K562 (cell line): ENCODE measurements at regions of chr1 and their contacts with region 1.

Region 1: DNA sequence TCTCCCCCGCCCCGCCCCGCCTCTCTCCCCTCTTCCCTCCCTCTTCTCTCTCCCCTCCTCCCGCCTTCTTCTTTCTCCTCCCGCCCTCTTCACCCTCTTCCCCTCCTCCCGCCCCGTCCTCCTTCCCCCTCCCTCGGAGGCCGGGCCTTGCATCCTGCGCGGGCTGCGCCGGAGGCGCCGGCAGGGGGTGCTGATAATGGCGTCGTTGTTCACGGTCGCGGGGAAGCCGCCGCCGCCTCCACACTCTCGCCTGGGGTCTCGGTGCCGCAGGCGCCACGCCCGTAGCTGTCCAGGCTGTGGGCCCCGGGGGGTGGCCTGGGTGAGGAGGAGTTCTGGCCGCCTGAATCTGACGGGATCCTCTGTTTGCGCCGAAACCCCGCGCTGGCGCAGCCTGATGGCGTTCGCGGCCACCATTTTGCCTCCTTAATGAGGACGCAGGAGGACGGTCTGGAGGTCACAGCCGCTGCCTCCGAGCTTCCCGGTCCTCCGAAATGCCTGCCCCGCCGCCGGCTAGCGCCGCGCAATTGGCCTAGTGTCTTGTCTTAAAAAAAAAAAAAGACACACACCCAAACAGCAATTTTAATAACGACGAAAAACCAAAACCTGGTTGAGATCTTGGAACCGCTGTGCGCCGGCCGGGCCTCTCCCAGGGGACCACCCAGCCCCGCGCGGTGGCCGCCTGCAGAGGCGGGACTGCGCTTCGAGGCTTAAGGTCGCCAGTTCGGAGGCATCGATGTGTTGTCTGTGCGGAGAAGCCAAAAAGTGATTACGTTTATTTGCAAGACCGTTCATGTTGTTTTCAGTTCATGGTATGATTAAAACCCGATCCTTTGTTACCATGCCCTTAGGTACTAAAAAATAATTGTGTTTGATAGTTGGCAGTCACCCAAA is 106.6 kb upstream of the HNRNPU start:
- DNase-seq: peak; percentile 87 to 99 (median 91)
- ATAC-seq: peak; percentile 83
- H3K4me3 ChIP-seq: peak overlapping the region; percentile 53
- H3K27ac ChIP-seq: peak overlapping the region; percentile 95
- H3K4me1 ChIP-seq: peaks cover 10 to 21% of the 10 kb centered on the region in 2 experiments; a peak in 4 of 5 replicates
- H3K27me3 ChIP-seq: no peaks in the 10 kb centered on the region
- CTCF ChIP-seq: peak; percentile 65 to 78 (median 74)
- EP300 ChIP-seq: peak; percentile 3; the same call in 1 of the 2 replicates
- POLR2A ChIP-seq: peak; percentile 95
- RAD21 ChIP-seq: peak; percentile 32 to 39

Region 2: DNA sequence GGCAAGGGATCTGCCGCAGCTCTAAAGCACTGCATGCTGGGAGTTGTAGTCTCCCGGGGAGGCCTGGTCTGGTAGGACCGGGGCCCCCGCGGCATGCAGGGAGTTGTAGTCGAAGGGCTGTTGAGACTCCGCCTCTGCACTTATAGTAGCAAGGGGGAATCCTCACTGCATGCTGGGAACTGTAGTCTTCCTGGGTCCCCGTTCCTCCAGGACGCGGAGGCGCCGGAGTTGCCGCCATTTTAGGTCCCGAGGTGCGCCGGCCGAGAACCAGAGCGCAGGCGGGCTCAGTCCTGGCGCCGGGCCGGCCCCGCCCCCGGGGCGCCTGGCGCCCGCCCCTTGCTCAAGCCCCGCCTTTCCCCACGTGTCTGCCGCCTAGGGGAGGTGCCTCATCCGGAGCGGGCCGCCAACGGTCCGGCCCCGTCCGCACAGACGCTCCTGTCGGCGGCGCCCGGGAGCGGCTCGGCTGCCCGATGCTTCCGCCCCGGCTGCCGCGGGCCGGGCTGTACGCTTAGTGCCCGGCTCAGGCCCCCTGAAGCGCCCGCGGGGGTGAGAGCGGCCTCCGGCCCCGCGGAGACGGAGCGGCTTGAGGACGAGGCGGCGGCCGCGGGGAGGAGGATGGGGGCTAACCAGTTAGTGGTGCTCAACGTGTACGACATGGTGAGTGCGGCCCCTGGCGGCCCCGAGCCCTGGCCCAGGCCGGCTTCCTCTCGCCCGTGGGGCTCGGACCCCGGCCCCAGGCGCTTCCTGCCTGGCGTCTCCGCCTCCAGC is 318.0 kb before region 1 on chr1 and contains the start of gene DESI2:
- CTCF ChIA-PET with region 1: no interaction called
- POLR2A ChIA-PET with region 1: interaction called, 4 read pairs
- in situ Hi-C with region 1: no loop called
- intact Hi-C with region 1: loop called (anchors 5 kb)
- DNase-seq: peak; percentile 98 to 99 (median 98)
- ATAC-seq: peak; percentile 95
- H3K4me3 ChIP-seq: peak within 1 kb of the TSS; percentile 76
- H3K27ac ChIP-seq: peak within 1 kb of the TSS; percentile 77
- H3K4me1 ChIP-seq: peaks cover 11 to 25% of the 10 kb centered on the region in 2 experiments
- H3K27me3 ChIP-seq: no peaks in the 10 kb centered on the region
- CTCF ChIP-seq: peak; percentile 54 to 60 (median 60)
- EP300 ChIP-seq: no peak; the same call in 1 of the 2 replicates
- POLR2A ChIP-seq: peak; percentile 86
- RAD21 ChIP-seq: peak; percentile 46 to 55
- polyA plus RNA-seq, gene DESI2: 17.4 to 20.4 TPM

Region 3: GRCh38 chr1:244796718-244797406 is 174.0 kb before region 1 on chr1:
- CTCF ChIA-PET with region 1: no interaction called
- POLR2A ChIA-PET with region 1: no interaction called
- in situ Hi-C with region 1: no loop called
- intact Hi-C with region 1: loop called (anchors 2 kb)
- DNase-seq: peak; percentile 62 to 80 (median 64)
- ATAC-seq: peak; percentile 77
- H3K4me3 ChIP-seq: no peak overlapping the region
- H3K27ac ChIP-seq: no peak overlapping the region
- H3K4me1 ChIP-seq: no peaks in the 10 kb centered on the region; a peak in 2 of 5 replicates
- H3K27me3 ChIP-seq: peaks cover 16 to 47% of the 10 kb centered on the region in 2 experiments
- CTCF ChIP-seq: peak; percentile 71 to 95 (median 91)
- EP300 ChIP-seq: no peak
- POLR2A ChIP-seq: no peak
- RAD21 ChIP-seq: peak; percentile 83 to 96

Region 4: DNA sequence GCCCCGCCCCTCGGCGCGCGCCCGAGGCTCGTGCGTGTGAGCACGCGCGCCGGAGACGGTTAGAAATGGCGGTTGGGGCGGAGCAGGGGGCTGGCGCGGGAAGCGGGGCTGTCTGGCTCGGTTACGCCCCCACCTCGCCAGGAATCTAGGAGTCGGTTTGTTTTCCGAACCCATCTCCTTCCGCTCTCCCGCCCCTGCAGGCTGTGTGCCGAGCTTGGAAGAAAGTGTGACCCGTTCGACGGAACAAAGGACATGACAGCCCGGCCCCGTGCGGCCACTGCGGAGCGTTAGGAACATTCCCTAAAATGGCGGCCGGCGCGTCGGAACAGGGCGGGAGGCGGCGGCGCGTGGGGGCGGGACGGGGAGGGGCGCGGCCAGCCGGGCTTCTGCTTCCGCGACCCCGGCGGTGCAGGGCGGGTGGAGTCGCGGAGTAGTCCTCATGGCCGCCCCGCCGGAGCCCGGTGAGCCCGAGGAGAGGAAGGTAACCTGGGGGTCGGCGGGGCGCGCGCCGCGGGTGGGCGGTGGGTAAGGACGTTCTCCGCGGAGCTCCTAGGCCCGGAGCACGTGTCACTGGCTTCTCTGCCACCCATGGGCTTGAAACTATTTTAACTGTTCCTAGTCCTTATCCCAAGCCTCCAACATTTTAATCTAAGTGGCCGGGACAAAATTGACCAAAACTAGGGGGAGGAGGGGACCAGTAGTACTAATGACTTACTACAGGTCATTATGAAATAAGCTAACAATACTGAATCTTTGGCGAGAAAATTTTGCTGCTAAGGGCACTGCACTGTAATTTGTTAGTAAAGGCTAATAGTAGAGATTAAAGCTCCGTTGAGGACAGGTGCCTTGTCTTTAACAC is 135.4 kb before region 1 on chr1 and contains the start of gene COX20:
- CTCF ChIA-PET with region 1: interaction called, 3 read pairs
- POLR2A ChIA-PET with region 1: interaction called, 10 read pairs
- in situ Hi-C with region 1: no loop called
- intact Hi-C with region 1: loop called (anchors 1 kb)
- DNase-seq: peak; percentile 94 to 98 (median 95)
- ATAC-seq: peak; percentile 79
- H3K4me3 ChIP-seq: peak within 1 kb of the TSS; percentile 74
- H3K27ac ChIP-seq: peak within 1 kb of the TSS; percentile 98
- H3K4me1 ChIP-seq: peaks cover 14 to 15% of the 10 kb centered on the region in 2 experiments; a peak in 4 of 5 replicates
- H3K27me3 ChIP-seq: no peaks in the 10 kb centered on the region
- CTCF ChIP-seq: no peak
- EP300 ChIP-seq: 0 out of 2 replicates have a peak, but pooled peaks have one; percentile 40
- POLR2A ChIP-seq: peak; percentile 97
- RAD21 ChIP-seq: no peak
- polyA plus RNA-seq, gene COX20: 145 to 171 TPM

Region 5: GRCh38 chr1:244864253-244865027 is 106.5 kb before region 1 on chr1 and contains the start of gene HNRNPU:
- CTCF ChIA-PET with region 1: interaction called, 3 read pairs
- POLR2A ChIA-PET with region 1: interaction called, 11 read pairs
- in situ Hi-C with region 1: loop called (anchors 5 kb)
- intact Hi-C with region 1: loop called (anchors 1 kb)
- DNase-seq: peak; percentile 93 to 99 (median 93)
- ATAC-seq: peak; percentile 86
- H3K4me3 ChIP-seq: peak within 1 kb of the TSS; percentile 96
- H3K27ac ChIP-seq: peak within 1 kb of the TSS; percentile 98
- H3K4me1 ChIP-seq: peaks cover 15% of the 10 kb centered on the region in 2 experiments; a peak in 4 of 5 replicates
- H3K27me3 ChIP-seq: no peaks in the 10 kb centered on the region
- CTCF ChIP-seq: peak; percentile 14 to 55 (median 43); a peak in 3 of 6 replicates
- EP300 ChIP-seq: peak; percentile 46
- POLR2A ChIP-seq: peak; percentile 98
- RAD21 ChIP-seq: peak in 1 of 2 experiments; percentile 10; a peak in 2 of 4 replicates
- polyA plus RNA-seq, gene HNRNPU: 159 to 174 TPM

Region 6: GRCh38 chr1:244918421-244919319 is 52.2 kb before region 1 on chr1:
- CTCF ChIA-PET with region 1: no interaction called
- POLR2A ChIA-PET with region 1: interaction called, 4 read pairs
- in situ Hi-C with region 1: no loop called
- intact Hi-C with region 1: loop called (anchors 2 kb)
- DNase-seq: peak; percentile 84 to 86 (median 85)
- ATAC-seq: peak; percentile 92
- H3K4me3 ChIP-seq: peak overlapping the region; percentile 36
- H3K27ac ChIP-seq: peak overlapping the region; percentile 64
- H3K4me1 ChIP-seq: peaks cover 7 to 13% of the 10 kb centered on the region in 2 experiments; a peak in 3 of 5 replicates
- H3K27me3 ChIP-seq: no peaks in the 10 kb centered on the region
- CTCF ChIP-seq: 0 out of 6 replicates have a peak, but pooled peaks of 1 of the 3 experiments have one; percentile 36
- EP300 ChIP-seq: no peak
- POLR2A ChIP-seq: peak; percentile 78
- RAD21 ChIP-seq: peak in 1 of 2 experiments; percentile 17; a peak in 1 of 4 replicates

Region 7: GRCh38 chr1:244988521-244988920 is 17.6 kb after region 1 on chr1:
- CTCF ChIA-PET with region 1: no interaction called
- POLR2A ChIA-PET with region 1: interaction called, 17 read pairs
- in situ Hi-C with region 1: no loop called
- intact Hi-C with region 1: no loop called
- DNase-seq: no peak
- ATAC-seq: no peak
- H3K4me3 ChIP-seq: no peak overlapping the region
- H3K27ac ChIP-seq: no peak overlapping the region
- H3K4me1 ChIP-seq: no peaks in the 10 kb centered on the region; a peak in 1 of 5 replicates
- H3K27me3 ChIP-seq: no peaks in the 10 kb centered on the region
- CTCF ChIP-seq: no peak
- EP300 ChIP-seq: no peak
- POLR2A ChIP-seq: no peak
- RAD21 ChIP-seq: no peak